ENCODE measurements at regions of chr20 and their contacts with region 1.

Region 1: GRCh38 chr20:45311589-45312211 is 3.6 kb upstream of the MATN4 start:
- DNase-seq: peak; percentile 79 to 85 (median 83)
- ATAC-seq: peak; percentile 57
- H3K4me3 ChIP-seq: no peak overlapping the region
- H3K27ac ChIP-seq: peak overlapping the region in 3 of 4 donors; percentile 29 to 57 (median 49)
- H3K4me1 ChIP-seq: peaks cover 64% of the 10 kb centered on the region
- H3K27me3 ChIP-seq: no peaks in the 10 kb centered on the region
- CTCF ChIP-seq: peak; percentile 64 to 86 (median 76)
- POLR2A ChIP-seq: peak in 2 of 3 donors; percentile 8 to 16

Region 2: GRCh38 chr20:45044084-45044573 is 267.6 kb before region 1 on chr20:
- intact Hi-C with region 1: loop called (anchors 10 kb)
- DNase-seq: peak; percentile 27 to 59 (median 42)
- ATAC-seq: peak; percentile 79
- H3K4me3 ChIP-seq: no peak overlapping the region
- H3K27ac ChIP-seq: no peak overlapping the region
- H3K4me1 ChIP-seq: peaks cover 12% of the 10 kb centered on the region
- H3K27me3 ChIP-seq: no peaks in the 10 kb centered on the region
- CTCF ChIP-seq: peak; percentile 66 to 85 (median 83)
- POLR2A ChIP-seq: no peak

Region 3: GRCh38 chr20:45268531-45268930 is 43.2 kb before region 1 on chr20:
- intact Hi-C with region 1: no loop called
- DNase-seq: no peak
- ATAC-seq: no peak
- H3K4me3 ChIP-seq: no peak overlapping the region
- H3K27ac ChIP-seq: no peak overlapping the region
- H3K4me1 ChIP-seq: no peaks in the 10 kb centered on the region
- H3K27me3 ChIP-seq: no peaks in the 10 kb centered on the region
- CTCF ChIP-seq: no peak
- POLR2A ChIP-seq: no peak

Region 4: GRCh38 chr20:45373353-45374100 is 61.8 kb after region 1 on chr20:
- intact Hi-C with region 1: no loop called
- DNase-seq: peak; percentile 88 to 94 (median 90)
- ATAC-seq: peak; percentile 93
- H3K4me3 ChIP-seq: peak overlapping the region; percentile 10
- H3K27ac ChIP-seq: peak overlapping the region in 3 of 4 donors; percentile 42 to 57 (median 52)
- H3K4me1 ChIP-seq: peaks cover 14% of the 10 kb centered on the region
- H3K27me3 ChIP-seq: no peaks in the 10 kb centered on the region
- CTCF ChIP-seq: peak; percentile 77 to 95 (median 91)
- POLR2A ChIP-seq: no peak

Region 5: DNA sequence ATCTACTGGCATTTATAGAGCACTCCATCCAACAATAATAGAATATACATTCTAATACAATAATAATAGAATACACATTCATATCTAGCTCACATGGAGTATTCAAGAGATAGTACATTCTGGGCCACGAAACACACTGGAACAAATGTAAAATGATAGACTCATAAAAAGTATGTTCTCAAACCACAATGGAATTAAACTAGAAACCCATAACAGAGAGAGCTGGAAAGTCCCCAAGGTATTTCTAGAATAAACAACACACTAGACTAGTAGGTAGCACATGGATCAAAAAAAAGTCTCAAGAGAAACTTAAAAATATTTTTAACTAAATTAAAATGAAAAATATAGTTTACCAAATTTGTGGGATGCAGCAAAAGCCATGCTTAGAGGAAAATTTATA is 75.6 kb after region 1 on chr20:
- intact Hi-C with region 1: no loop called
- DNase-seq: no peak
- ATAC-seq: no peak
- H3K4me3 ChIP-seq: no peak overlapping the region
- H3K27ac ChIP-seq: no peak overlapping the region
- H3K4me1 ChIP-seq: no peaks in the 10 kb centered on the region
- H3K27me3 ChIP-seq: no peaks in the 10 kb centered on the region
- CTCF ChIP-seq: no peak
- POLR2A ChIP-seq: no peak

Measured in body of pancreas (tissue), 4 donors.